Naive thymus-derived CD4-positive, alpha-beta T cell (primary cell): ENCODE measurements at regions of chr10 and their contacts with region 1.

Region 1: DNA sequence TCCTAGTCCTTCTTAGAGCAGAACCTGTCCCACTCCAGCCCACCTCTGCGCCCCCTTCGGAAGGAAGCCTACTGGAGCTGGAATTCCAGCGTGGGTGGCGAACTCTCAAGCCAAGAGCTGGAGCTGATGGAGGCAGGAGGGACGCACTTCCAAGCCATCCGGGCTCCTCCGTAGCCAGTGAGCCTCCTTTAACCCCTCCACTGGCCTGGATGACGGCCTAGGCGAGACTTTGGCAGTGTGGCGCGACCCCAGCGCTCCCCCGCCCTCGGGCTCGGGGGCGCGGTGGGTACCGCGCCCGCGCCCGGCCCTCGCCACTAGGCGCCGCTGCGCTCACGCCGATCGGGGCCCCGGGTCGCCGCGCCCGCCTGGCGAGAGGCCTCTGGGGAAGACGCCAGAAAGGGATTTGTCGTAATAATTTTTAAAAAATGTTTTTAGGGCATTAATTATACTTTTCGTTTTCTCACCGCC is 5.1 kb upstream of the EMX2 start:
- DNase-seq: peak in 3 of 9 donors; percentile 14 to 47 (median 18)
- ATAC-seq: no peak
- H3K4me3 ChIP-seq: no peak overlapping the region
- H3K4me3 Mint-ChIP-seq: peak overlapping the region in 1 of 10 donors; percentile 14
- H3K27ac ChIP-seq: no peak overlapping the region
- H3K27ac Mint-ChIP-seq: no peak overlapping the region
- H3K4me1 ChIP-seq: no peaks in the 10 kb centered on the region
- H3K4me1 Mint-ChIP-seq: peaks cover 0 to 30% (median 21%) of the 10 kb centered on the region in 7 donors
- H3K27me3 ChIP-seq: peaks cover 0 to 9% of the 10 kb centered on the region in 2 donors
- H3K27me3 Mint-ChIP-seq: peaks cover 58 to 90% (median 72%) of the 10 kb centered on the region in 5 donors

Region 2: DNA sequence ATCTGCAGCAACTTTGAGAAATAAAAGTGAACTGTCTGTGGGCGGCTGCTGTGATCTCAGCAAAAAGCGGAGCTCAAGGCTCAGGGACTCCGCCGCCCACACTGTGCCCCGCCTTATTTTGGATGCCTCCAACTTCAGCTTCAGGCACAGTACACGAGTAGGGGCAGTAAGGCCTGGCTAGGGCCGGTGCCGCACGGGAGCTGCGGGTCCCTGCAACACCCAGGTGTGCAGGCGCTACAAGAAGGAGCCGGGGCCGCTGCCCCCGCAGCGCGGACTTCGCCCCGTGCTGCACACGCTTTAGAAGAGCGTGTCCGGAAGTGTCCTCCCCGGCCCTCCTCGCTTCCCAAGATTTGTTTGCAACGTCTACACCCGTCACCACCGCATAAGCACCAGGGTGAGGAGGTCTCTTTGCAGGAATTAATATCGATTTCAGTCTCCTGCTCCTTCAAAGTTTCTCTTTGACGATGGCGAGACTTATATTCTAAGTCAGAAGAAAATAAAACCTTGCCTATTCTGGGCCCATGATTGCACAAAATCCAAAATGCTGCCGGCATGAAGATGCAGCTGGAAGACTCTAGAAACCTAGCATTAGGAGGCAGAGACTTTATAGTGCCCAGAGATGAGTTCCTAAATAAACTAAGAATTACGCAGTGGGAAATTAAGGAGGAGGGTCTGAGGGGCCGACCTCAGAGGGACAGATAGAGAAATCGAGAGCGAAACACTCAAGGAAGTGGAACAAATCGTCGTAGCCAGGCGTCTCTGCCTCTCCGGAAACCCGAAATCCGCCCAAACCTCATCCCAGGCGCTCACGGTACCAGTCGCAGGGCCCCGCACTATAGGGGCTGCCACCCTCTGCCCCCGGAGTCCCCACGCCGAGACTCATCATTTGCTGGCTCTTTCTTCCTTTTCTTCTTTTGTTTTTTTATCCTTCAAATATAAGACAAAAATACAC is 405.8 kb before region 1 on chr10:
- CTCF ChIA-PET with region 1: no interaction called
- POLR2A ChIA-PET with region 1: no interaction called
- intact Hi-C with region 1: loop called in 1 of 2 experiments (anchors 2 kb)
- DNase-seq: no peak
- ATAC-seq: no peak
- H3K4me3 ChIP-seq: peak overlapping the region; percentile 33
- H3K4me3 Mint-ChIP-seq: peak overlapping the region in 9 of 10 donors; percentile 60 to 95 (median 77)
- H3K27ac ChIP-seq: no peak overlapping the region
- H3K27ac Mint-ChIP-seq: peak overlapping the region in 1 of 9 donors; percentile 80
- H3K4me1 ChIP-seq: peaks cover 0 to 12% of the 10 kb centered on the region in 2 donors
- H3K4me1 Mint-ChIP-seq: peaks cover 9 to 44% (median 37%) of the 10 kb centered on the region in 7 donors
- H3K27me3 ChIP-seq: peaks cover 0 to 52% of the 10 kb centered on the region in 2 donors
- H3K27me3 Mint-ChIP-seq: peaks cover 76 to 90% (median 87%) of the 10 kb centered on the region in 5 donors

Region 3: GRCh38 chr10:117167789-117168674 is 369.4 kb before region 1 on chr10:
- CTCF ChIA-PET with region 1: no interaction called
- POLR2A ChIA-PET with region 1: no interaction called
- intact Hi-C with region 1: loop called in 1 of 2 experiments (anchors 5 kb)
- DNase-seq: peak; percentile 39 to 81 (median 73)
- ATAC-seq: peak; percentile 93
- H3K4me3 ChIP-seq: peak overlapping the region; percentile 39
- H3K4me3 Mint-ChIP-seq: peak overlapping the region; percentile 47 to 78 (median 70)
- H3K27ac ChIP-seq: no peak overlapping the region
- H3K27ac Mint-ChIP-seq: peak overlapping the region in 1 of 9 donors; percentile 52
- H3K4me1 ChIP-seq: peaks cover 3 to 21% of the 10 kb centered on the region in 2 donors
- H3K4me1 Mint-ChIP-seq: peaks cover 9 to 48% (median 31%) of the 10 kb centered on the region in 7 donors
- H3K27me3 ChIP-seq: peaks cover 0 to 30% of the 10 kb centered on the region in 2 donors
- H3K27me3 Mint-ChIP-seq: peaks cover 70 to 92% (median 80%) of the 10 kb centered on the region in 5 donors

Region 4: GRCh38 chr10:117551330-117552155 is 14.1 kb after region 1 on chr10:
- CTCF ChIA-PET with region 1: no interaction called
- POLR2A ChIA-PET with region 1: no interaction called
- intact Hi-C with region 1: loop called in 1 of 2 experiments (anchors 2 kb)
- DNase-seq: no peak
- ATAC-seq: no peak
- H3K4me3 ChIP-seq: no peak overlapping the region
- H3K4me3 Mint-ChIP-seq: no peak overlapping the region
- H3K27ac ChIP-seq: no peak overlapping the region
- H3K27ac Mint-ChIP-seq: peak overlapping the region in 1 of 9 donors; percentile 80
- H3K4me1 ChIP-seq: no peaks in the 10 kb centered on the region
- H3K4me1 Mint-ChIP-seq: peaks cover 10 to 32% (median 20%) of the 10 kb centered on the region in 7 donors
- H3K27me3 ChIP-seq: peaks cover 0 to 23% of the 10 kb centered on the region in 2 donors
- H3K27me3 Mint-ChIP-seq: peaks cover 84 to 96% (median 90%) of the 10 kb centered on the region in 5 donors

Region 5: DNA sequence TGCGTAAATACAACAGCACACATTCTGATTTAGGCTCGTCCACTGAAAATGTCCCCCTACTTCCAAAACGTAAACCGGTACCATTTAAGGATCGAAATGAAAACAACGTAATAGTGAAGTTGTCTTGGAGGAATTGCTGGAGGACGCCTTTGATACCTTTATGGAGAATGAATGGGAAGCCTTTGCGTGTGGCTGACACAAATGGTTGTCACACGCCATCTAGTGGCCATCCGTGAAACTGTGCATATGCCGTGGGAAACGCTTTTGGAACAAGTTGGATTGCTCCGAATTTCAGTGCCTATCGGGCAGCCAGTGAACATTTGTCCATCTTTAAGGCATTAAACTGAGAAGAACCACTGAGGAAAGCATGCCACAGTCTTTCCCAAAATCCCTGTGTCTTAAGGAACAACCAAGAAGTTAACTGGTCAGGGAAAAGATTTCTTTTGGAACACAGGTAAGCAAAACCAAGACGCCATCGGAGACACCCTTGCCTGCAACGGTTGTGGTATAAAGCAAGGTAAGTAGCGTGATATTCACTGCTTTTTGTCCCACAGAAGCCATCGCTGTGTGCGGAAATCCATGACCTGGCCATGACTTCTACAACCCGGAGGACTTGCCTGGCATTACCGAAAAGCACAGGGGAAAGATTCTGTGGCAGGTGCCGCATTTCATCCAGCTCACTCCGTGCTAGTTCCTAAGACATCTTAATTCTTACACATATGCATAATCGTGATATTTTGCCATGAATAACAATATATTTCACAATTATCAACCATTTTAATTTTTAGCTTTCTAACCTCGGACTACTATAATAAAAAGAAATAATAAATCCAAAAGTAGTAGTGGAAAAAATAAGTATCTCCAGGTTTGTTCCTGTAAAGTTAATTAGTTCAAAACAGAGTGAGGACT is 704.0 kb after region 1 on chr10:
- CTCF ChIA-PET with region 1: interaction called, 7 read pairs
- POLR2A ChIA-PET with region 1: no interaction called
- intact Hi-C with region 1: loop called in 1 of 2 experiments (anchors 1 kb)
- DNase-seq: peak; percentile 16 to 63 (median 43)
- ATAC-seq: peak; percentile 45
- H3K4me3 ChIP-seq: no peak overlapping the region
- H3K4me3 Mint-ChIP-seq: no peak overlapping the region
- H3K27ac ChIP-seq: no peak overlapping the region
- H3K27ac Mint-ChIP-seq: no peak overlapping the region
- H3K4me1 ChIP-seq: no peaks in the 10 kb centered on the region
- H3K4me1 Mint-ChIP-seq: peaks cover 0 to 6% (median 0%) of the 10 kb centered on the region in 7 donors
- H3K27me3 ChIP-seq: no peaks in the 10 kb centered on the region
- H3K27me3 Mint-ChIP-seq: peaks cover 38 to 67% (median 52%) of the 10 kb centered on the region in 5 donors

Region 6: DNA sequence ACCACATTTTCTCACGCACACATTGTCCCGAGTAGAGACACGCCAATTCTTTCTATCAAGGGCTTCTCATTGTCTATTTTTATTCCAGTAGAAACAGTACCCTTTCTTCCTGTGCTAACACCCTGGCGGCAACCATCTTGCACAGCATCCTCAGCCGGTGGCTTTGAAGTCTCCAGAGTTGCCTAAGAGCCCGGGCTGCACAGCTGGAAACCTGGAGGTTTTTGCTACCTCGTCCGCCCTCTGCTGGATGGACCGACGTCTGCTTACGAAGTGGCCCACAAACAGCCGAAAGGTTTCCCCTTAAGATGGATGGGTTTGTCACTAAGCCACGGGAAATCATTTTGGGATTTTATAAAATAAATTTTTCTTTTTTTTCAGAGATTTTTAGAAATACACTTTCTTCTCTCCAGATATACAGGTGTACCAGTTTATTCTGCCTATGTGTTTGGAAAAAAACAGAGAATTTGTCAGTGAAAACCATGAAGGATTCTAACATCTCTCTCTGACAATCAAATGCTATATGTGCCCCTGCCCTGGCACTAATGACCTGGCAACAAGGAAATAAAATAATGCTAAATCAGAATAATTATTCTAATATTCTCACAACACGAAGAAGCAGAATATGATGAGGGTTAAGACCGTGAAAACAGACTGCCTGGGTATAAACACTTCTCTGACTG is 886.5 kb after region 1 on chr10:
- CTCF ChIA-PET with region 1: no interaction called
- POLR2A ChIA-PET with region 1: no interaction called
- intact Hi-C with region 1: loop called in 1 of 2 experiments (anchors 5 kb)
- DNase-seq: peak; percentile 14 to 57 (median 46)
- ATAC-seq: peak; percentile 80
- H3K4me3 ChIP-seq: no peak overlapping the region
- H3K4me3 Mint-ChIP-seq: no peak overlapping the region
- H3K27ac ChIP-seq: no peak overlapping the region
- H3K27ac Mint-ChIP-seq: no peak overlapping the region
- H3K4me1 ChIP-seq: no peaks in the 10 kb centered on the region
- H3K4me1 Mint-ChIP-seq: no peaks in the 10 kb centered on the region
- H3K27me3 ChIP-seq: no peaks in the 10 kb centered on the region
- H3K27me3 Mint-ChIP-seq: peaks cover 14 to 41% (median 24%) of the 10 kb centered on the region in 5 donors

Region 7: GRCh38 chr10:118594392-118595063 is 1057.1 kb after region 1 on chr10:
- CTCF ChIA-PET with region 1: no interaction called
- POLR2A ChIA-PET with region 1: no interaction called
- intact Hi-C with region 1: loop called in 1 of 2 experiments (anchors 5 kb)
- DNase-seq: peak; percentile 21 to 59 (median 35)
- ATAC-seq: peak; percentile 81
- H3K4me3 ChIP-seq: no peak overlapping the region
- H3K4me3 Mint-ChIP-seq: peak overlapping the region in 7 of 10 donors; percentile 18 to 75 (median 53)
- H3K27ac ChIP-seq: no peak overlapping the region
- H3K27ac Mint-ChIP-seq: no peak overlapping the region
- H3K4me1 ChIP-seq: peaks cover 0 to 17% of the 10 kb centered on the region in 2 donors
- H3K4me1 Mint-ChIP-seq: peaks cover 9 to 37% (median 27%) of the 10 kb centered on the region in 7 donors
- H3K27me3 ChIP-seq: peaks cover 0 to 17% of the 10 kb centered on the region in 2 donors
- H3K27me3 Mint-ChIP-seq: peaks cover 54 to 67% (median 65%) of the 10 kb centered on the region in 5 donors